Stomach (tissue), 19 donors: ENCODE measurements at regions of chr1 and their contacts with region 1.

Region 1: DNA sequence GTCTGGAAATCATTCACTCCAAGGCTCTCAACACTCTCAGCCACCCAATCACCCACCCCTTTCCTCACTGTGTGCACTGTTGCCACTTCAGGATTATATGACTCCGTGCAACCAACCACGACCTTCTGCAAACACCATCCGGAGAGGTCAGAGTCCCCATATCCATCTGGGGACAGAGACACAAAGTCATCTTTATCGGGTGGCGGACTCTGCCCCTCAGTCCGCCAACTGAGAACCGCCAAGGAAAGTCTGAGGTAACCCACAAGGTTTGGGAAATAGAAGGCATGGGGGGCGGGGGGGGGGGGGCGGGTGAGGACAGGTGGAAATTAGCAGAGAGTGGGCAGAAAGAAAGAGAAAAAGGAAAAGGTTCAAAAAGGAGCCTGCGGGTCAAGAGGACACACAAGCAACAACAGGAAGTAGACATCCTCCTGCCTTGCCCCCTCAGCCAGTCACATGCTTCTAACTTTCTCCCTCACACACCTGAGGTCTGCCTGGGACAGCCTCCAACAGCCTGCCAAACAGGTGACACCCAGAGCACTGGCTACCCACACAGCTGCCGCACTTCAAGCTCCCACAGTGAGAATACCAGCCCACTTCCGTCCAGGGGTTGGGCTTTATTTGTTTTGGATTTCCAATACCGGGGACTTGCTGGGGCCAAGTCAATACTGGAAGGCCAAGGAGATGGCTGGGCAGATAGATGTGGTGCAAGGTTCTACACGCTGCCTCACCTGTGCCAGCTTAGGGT is 58.1 kb downstream of the SSBP3 start:
- DNase-seq: peak; percentile 87 to 91
- H3K4me3 ChIP-seq: no peak overlapping the region
- H3K27ac ChIP-seq: peak overlapping the region; percentile 58 to 82 (median 72)
- H3K4me1 ChIP-seq: peaks cover 27 to 91% (median 63%) of the 10 kb centered on the region in 4 donors
- H3K27me3 ChIP-seq: no peaks in the 10 kb centered on the region
- CTCF ChIP-seq: no peak
- EP300 ChIP-seq: no peak
- POLR2A ChIP-seq: no peak

Region 2: GRCh38 chr1:54397090-54397591 is 49.0 kb after region 1 on chr1:
- intact Hi-C with region 1: loop called (anchors 10 kb)
- DNase-seq: peak; percentile 57 to 65
- H3K4me3 ChIP-seq: peak overlapping the region in 1 of 4 donors; percentile 17
- H3K27ac ChIP-seq: peak overlapping the region; percentile 19 to 62 (median 55)
- H3K4me1 ChIP-seq: peaks cover 59 to 95% (median 76%) of the 10 kb centered on the region in 4 donors
- H3K27me3 ChIP-seq: no peaks in the 10 kb centered on the region
- CTCF ChIP-seq: no peak
- EP300 ChIP-seq: no peak
- POLR2A ChIP-seq: no peak